H1 (cell line): ENCODE measurements at regions of chr5 and their contacts with region 1.

Region 1: DNA sequence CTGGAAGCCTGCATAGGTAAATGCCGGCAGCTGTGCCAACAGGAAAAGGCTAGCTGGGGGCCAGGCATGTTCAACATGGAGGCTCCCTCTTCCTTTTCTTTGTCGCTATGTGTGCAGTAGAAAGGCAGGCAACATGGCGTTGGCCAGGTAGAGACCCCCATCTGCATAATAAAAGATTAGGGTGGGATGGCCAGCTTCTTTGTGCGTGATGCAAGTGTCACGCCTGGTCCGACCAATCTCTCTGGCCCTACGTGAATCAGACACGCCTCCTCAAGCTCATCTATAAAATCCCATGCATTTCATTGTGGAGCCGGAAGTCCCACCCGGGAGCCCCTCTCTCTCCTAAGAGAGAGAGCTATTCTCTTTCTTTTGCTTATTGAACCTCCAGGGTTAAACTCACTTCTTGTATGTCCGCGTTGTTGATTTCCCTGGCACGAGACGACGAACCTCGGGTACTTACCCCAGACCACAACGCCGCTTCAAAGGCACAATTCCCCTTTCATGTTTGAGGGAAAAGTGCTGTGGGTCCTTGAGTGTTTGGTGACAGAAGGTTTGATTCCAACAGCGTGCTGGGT is 25.0 kb upstream of the C5orf47 start:
- DNase-seq: peak in 1 of 2 experiments; percentile 58
- H3K4me3 ChIP-seq: peak overlapping the region; percentile 27 to 54 (median 39); a peak in 6 of 8 replicates
- H3K27ac ChIP-seq: peak overlapping the region; percentile 93
- H3K4me1 ChIP-seq: peaks cover 3 to 29% (median 14%) of the 10 kb centered on the region in 4 experiments; a peak in 5 of 7 replicates
- H3K27me3 ChIP-seq: no peaks in the 10 kb centered on the region
- CTCF ChIP-seq: no peak
- EP300 ChIP-seq: no peak
- POLR2A ChIP-seq: peak; percentile 88 to 90
- RAD21 ChIP-seq: no peak

Region 2: GRCh38 chr5:173615884-173616576 is 347.9 kb before region 1 on chr5:
- CTCF ChIA-PET with region 1: interaction called, 11 read pairs
- POLR2A ChIA-PET with region 1: interaction called, 13 read pairs
- DNase-seq: peak in 1 of 2 experiments; percentile 71
- H3K4me3 ChIP-seq: peak overlapping the region; percentile 82 to 95 (median 86)
- H3K27ac ChIP-seq: peak overlapping the region; percentile 76
- H3K4me1 ChIP-seq: peaks cover 2 to 14% (median 11%) of the 10 kb centered on the region in 4 experiments; a peak in 4 of 7 replicates
- H3K27me3 ChIP-seq: no peaks in the 10 kb centered on the region
- CTCF ChIP-seq: peak; percentile 56 to 63 (median 60)
- EP300 ChIP-seq: no peak
- POLR2A ChIP-seq: peak; percentile 66 to 74
- RAD21 ChIP-seq: peak in 1 of 2 experiments; percentile 32; a peak in 2 of 4 replicates

Region 3: GRCh38 chr5:173625696-173626504 is 338.1 kb before region 1 on chr5:
- CTCF ChIA-PET with region 1: interaction called, 5 read pairs
- POLR2A ChIA-PET with region 1: interaction called, 13 read pairs
- DNase-seq: no peak
- H3K4me3 ChIP-seq: no peak overlapping the region
- H3K27ac ChIP-seq: no peak overlapping the region
- H3K4me1 ChIP-seq: peaks cover 12 to 18% (median 16%) of the 10 kb centered on the region in 4 experiments
- H3K27me3 ChIP-seq: no peaks in the 10 kb centered on the region
- CTCF ChIP-seq: no peak
- EP300 ChIP-seq: no peak
- POLR2A ChIP-seq: no peak
- RAD21 ChIP-seq: 0 out of 4 replicates have a peak, but pooled peaks have one; percentile 3

Region 4: DNA sequence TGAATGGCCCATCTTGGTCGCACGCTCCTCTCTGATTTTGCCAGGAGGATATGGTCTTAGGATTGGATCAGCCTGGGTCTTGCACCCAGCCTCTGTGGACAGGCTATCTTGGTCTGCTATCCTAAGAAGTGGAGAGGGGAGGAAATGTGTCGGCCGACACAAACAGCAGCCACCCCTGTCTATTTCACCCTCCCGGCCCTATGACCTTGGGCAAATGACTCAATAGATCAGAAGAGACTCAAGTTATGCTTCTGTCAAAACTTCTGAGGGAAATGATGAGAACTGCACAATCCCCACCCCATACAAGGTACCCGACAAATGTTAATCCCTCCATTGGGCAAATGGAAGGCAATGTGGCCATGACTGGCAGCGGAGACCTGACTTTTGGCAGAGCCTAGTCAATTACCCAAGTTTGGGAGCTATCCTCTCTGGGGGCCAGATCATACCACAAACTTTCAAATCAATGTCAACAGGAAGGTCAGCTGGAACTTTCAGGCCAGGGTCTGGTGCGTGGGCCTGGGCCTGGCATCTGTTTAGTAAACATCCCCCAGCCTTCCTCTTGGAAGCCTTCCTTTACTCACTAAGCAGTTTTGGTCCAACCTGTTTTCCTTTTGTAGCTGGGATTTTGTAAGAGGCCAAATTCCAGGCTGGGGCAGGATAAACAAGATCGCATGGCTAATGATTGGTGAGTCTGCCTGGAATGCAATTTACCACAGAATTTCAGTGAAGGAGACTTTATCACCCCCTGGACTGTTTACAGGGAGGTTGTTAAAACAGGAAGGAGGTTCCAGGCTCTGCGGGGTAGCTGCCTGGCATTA is 140.0 kb before region 1 on chr5:
- CTCF ChIA-PET with region 1: no interaction called
- POLR2A ChIA-PET with region 1: no interaction called
- DNase-seq: peak in 1 of 2 experiments; percentile 9
- H3K4me3 ChIP-seq: no peak overlapping the region
- H3K27ac ChIP-seq: no peak overlapping the region
- H3K4me1 ChIP-seq: peaks cover 2 to 6% (median 4%) of the 10 kb centered on the region in 4 experiments; a peak in 4 of 7 replicates
- H3K27me3 ChIP-seq: no peaks in the 10 kb centered on the region; a peak in 1 of 7 replicates
- CTCF ChIP-seq: no peak
- EP300 ChIP-seq: no peak
- POLR2A ChIP-seq: no peak
- RAD21 ChIP-seq: no peak

Region 5: GRCh38 chr5:173887610-173888472 is 76.1 kb before region 1 on chr5 and contains the start of gene CPEB4:
- CTCF ChIA-PET with region 1: interaction called, 6 read pairs
- POLR2A ChIA-PET with region 1: interaction called, 16 read pairs
- DNase-seq: peak; percentile 92 to 99
- H3K4me3 ChIP-seq: peak within 1 kb of the TSS; percentile 47 to 87 (median 68)
- H3K27ac ChIP-seq: peak within 1 kb of the TSS; percentile 100
- H3K4me1 ChIP-seq: peaks cover 3 to 10% (median 7%) of the 10 kb centered on the region in 4 experiments
- H3K27me3 ChIP-seq: no peaks in the 10 kb centered on the region
- CTCF ChIP-seq: no peak
- EP300 ChIP-seq: peak in 1 of 2 experiments; percentile 7; a peak in 1 of 3 replicates
- POLR2A ChIP-seq: peak in 1 of 2 experiments; percentile 61; a peak in 2 of 3 replicates
- RAD21 ChIP-seq: peak in 1 of 2 experiments; percentile 0; a peak in 1 of 4 replicates
- total RNA-seq, gene CPEB4: 13.4 and 14.3 TPM in 2 replicates

Region 6: DNA sequence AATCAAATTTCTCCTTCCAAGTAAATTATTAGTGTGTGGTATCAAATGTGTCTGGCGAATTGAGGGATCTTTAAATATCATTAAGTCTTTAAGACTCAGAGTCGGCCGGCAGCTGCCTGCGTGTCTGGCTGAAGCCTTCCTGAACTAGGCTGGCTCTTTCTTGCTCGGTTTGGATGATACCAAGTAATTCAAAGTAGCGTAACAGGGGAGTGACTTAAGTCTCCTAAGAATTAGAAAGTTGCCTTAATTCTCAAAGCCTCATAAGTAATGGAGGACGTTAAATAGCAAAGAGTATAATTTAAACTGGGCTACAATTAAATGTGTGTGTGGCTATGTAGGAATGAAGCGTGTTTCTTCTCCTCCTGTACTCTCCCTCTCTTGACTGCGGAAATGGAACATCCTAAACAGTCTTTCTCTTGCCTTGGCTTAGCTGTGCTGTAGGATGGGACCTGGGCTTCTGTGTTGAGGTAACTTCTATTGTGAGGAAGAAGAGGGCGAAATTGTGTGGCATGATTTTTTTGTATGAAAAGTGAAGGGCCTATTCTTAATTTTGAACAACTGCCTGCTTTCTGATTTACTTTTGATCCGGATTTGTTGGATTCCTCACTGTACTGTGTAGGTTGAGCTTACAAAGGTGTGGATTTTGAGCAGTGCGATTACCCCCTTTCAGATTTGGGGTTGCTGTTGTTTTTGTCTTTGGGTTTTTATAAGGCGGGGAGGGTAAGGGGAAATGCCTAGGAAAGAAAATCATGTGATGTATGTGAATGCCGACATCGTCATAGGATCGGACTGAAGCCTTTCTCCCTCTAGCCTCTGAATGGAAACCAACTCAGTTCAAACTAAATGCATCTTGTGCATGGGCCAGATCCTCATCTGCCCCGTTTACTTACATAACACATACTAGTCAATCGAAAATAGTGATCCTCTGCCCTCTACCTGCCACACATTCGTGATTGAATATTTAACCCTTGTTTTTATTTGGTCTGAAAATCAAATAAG is 45.9 kb before region 1 on chr5:
- CTCF ChIA-PET with region 1: no interaction called
- POLR2A ChIA-PET with region 1: interaction called, 17 read pairs
- DNase-seq: no peak
- H3K4me3 ChIP-seq: peak overlapping the region; percentile 7 to 68 (median 48)
- H3K27ac ChIP-seq: peak overlapping the region; percentile 95
- H3K4me1 ChIP-seq: peaks cover 3 to 11% (median 9%) of the 10 kb centered on the region in 4 experiments
- H3K27me3 ChIP-seq: no peaks in the 10 kb centered on the region
- CTCF ChIP-seq: no peak
- EP300 ChIP-seq: peak in 1 of 2 experiments; percentile 99; a peak in 2 of 3 replicates
- POLR2A ChIP-seq: peak; percentile 81 to 87
- RAD21 ChIP-seq: 0 out of 4 replicates have a peak, but pooled peaks of 1 of the 2 experiments have one; percentile 4

Region 7: GRCh38 chr5:173925448-173926071 is 38.4 kb before region 1 on chr5:
- CTCF ChIA-PET with region 1: interaction called, 9 read pairs
- POLR2A ChIA-PET with region 1: interaction called, 11 read pairs
- DNase-seq: no peak
- H3K4me3 ChIP-seq: no peak overlapping the region
- H3K27ac ChIP-seq: no peak overlapping the region
- H3K4me1 ChIP-seq: peaks cover 0 to 17% (median 4%) of the 10 kb centered on the region in 4 experiments; a peak in 4 of 7 replicates
- H3K27me3 ChIP-seq: no peaks in the 10 kb centered on the region
- CTCF ChIP-seq: peak; percentile 55 to 60 (median 58)
- EP300 ChIP-seq: no peak
- POLR2A ChIP-seq: no peak
- RAD21 ChIP-seq: peak; percentile 50 to 59

Region 8: GRCh38 chr5:173941758-173942401 is 22.1 kb before region 1 on chr5:
- CTCF ChIA-PET with region 1: interaction called, 3 read pairs
- POLR2A ChIA-PET with region 1: interaction called, 64 read pairs
- DNase-seq: peak in 1 of 2 experiments; percentile 33
- H3K4me3 ChIP-seq: peak overlapping the region in 1 of 4 experiments; percentile 37; a peak in 1 of 8 replicates
- H3K27ac ChIP-seq: peak overlapping the region; percentile 61; the same call in 1 of the 2 replicates
- H3K4me1 ChIP-seq: peaks cover 0 to 11% (median 7%) of the 10 kb centered on the region in 4 experiments; a peak in 4 of 7 replicates
- H3K27me3 ChIP-seq: no peaks in the 10 kb centered on the region
- CTCF ChIP-seq: no peak
- EP300 ChIP-seq: no peak
- POLR2A ChIP-seq: peak in 1 of 2 experiments; percentile 53; a peak in 1 of 3 replicates
- RAD21 ChIP-seq: no peak

Region 9: GRCh38 chr5:174083056-174083827 is 119.3 kb after region 1 on chr5:
- CTCF ChIA-PET with region 1: no interaction called
- POLR2A ChIA-PET with region 1: no interaction called
- DNase-seq: no peak
- H3K4me3 ChIP-seq: no peak overlapping the region
- H3K27ac ChIP-seq: no peak overlapping the region
- H3K4me1 ChIP-seq: no peaks in the 10 kb centered on the region
- H3K27me3 ChIP-seq: no peaks in the 10 kb centered on the region
- CTCF ChIP-seq: no peak
- EP300 ChIP-seq: no peak
- POLR2A ChIP-seq: no peak
- RAD21 ChIP-seq: no peak